ENCODE measurements at regions of chr7 and their contacts with region 1.

Region 1: GRCh38 chr7:604001-604883 is 84.6 kb upstream of the PDGFA start:
- DNase-seq: peak; percentile 92 to 96 (median 95)
- H3K4me3 ChIP-seq: peak overlapping the region in 2 of 3 experiments; percentile 32 to 41
- H3K4me3 Mint-ChIP-seq: peak overlapping the region; percentile 69 to 88
- H3K27ac ChIP-seq: peak overlapping the region; percentile 96 to 97
- H3K27ac Mint-ChIP-seq: peak overlapping the region; percentile 97 to 99 (median 98)
- H3K4me1 ChIP-seq: peaks cover 46 to 58% of the 10 kb centered on the region in 2 donors
- H3K4me1 Mint-ChIP-seq: peaks cover 50% of the 10 kb centered on the region
- H3K27me3 ChIP-seq: no peaks in the 10 kb centered on the region
- H3K27me3 Mint-ChIP-seq: peaks cover 1 to 8% (median 2%) of the 10 kb centered on the region in 3 donors
- CTCF ChIP-seq: no peak

Region 2: DNA sequence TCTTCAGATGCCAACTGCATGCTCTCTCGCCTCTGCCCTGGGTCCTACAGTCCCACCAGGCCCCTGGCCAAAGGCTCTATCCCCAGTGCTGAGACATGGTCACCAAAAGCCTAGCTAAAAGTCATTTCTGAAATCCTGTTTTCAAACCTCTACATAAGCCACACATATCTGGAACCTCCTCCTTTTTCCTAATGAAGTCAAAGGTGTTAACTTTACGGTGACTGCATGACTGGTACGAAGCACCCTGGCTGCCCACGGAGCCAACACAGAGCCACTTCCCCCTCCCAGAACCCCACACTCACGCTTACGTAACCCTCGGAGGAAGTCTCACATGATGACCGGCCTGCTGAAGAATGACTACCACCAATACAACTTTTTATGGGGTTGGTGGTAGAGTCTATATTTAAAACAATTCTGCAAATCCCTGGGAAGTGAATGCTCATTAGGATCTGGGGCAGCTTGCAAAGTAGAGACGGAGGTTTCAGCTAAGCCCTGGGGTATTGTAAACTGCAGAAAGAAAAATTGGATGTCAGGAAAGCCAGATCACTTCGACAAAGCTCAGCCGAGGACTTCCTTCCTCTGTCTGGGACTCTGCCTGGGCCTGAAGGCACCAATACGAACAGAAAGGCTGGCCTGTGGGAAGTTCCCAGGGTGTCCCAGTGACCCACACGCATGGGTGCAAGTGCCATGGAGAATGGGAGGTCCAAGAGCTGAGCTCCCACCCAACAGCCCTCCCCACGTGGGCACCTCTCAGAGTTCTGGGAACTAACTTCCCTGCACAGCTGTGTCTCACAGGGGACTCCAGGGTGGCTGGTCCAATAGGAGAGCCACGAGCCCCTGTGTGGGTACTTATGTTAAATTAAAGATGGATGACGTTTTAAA is 135.3 kb before region 1 on chr7:
- intact Hi-C with region 1: loop called in 1 of 2 experiments (anchors 2 kb)
- DNase-seq: peak; percentile 41 to 84 (median 59)
- H3K4me3 ChIP-seq: peak overlapping the region in 1 of 3 experiments; percentile 9
- H3K4me3 Mint-ChIP-seq: peak overlapping the region in 1 of 2 donors; percentile 40
- H3K27ac ChIP-seq: peak overlapping the region; percentile 80 to 86
- H3K27ac Mint-ChIP-seq: peak overlapping the region; percentile 96 to 100 (median 98)
- H3K4me1 ChIP-seq: peaks cover 15% of the 10 kb centered on the region in 2 donors
- H3K4me1 Mint-ChIP-seq: peaks cover 18% of the 10 kb centered on the region
- H3K27me3 ChIP-seq: no peaks in the 10 kb centered on the region
- H3K27me3 Mint-ChIP-seq: peaks cover 2 to 16% (median 8%) of the 10 kb centered on the region in 3 donors
- CTCF ChIP-seq: no peak

Region 3: DNA sequence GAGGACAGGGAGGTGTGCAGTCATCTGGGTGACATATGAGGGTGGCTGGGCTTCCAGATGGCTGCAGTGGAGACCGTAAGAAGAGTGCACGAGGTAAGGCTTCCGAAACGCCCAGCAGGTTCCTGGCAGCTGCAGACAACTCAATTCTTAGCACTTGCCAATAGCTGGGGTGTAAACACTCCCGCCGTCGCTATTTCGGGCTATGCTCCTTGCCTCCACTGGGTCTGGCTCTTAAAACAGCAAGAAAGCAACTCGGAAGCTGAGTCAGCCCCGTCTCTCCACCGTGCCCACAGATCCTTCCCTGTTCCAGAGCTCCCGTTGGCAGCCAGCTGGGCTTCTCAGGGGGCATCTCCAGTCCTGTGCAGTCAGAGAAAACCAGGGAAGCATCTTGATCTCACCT is 78.5 kb before region 1 on chr7:
- intact Hi-C with region 1: no loop called
- DNase-seq: no peak
- H3K4me3 ChIP-seq: no peak overlapping the region
- H3K4me3 Mint-ChIP-seq: no peak overlapping the region
- H3K27ac ChIP-seq: no peak overlapping the region
- H3K27ac Mint-ChIP-seq: no peak overlapping the region
- H3K4me1 ChIP-seq: peaks cover 6 to 17% of the 10 kb centered on the region in 2 donors
- H3K4me1 Mint-ChIP-seq: peaks cover 2% of the 10 kb centered on the region
- H3K27me3 ChIP-seq: peaks cover 19 to 50% of the 10 kb centered on the region in 2 donors
- H3K27me3 Mint-ChIP-seq: peaks cover 44 to 54% (median 52%) of the 10 kb centered on the region in 3 donors
- CTCF ChIP-seq: no peak

Region 4: GRCh38 chr7:726084-726853 is 122.0 kb after region 1 on chr7 and contains the start of gene DNAAF5:
- intact Hi-C with region 1: loop called in 1 of 2 experiments (anchors 10 kb)
- DNase-seq: peak; percentile 82 to 87 (median 86)
- H3K4me3 ChIP-seq: peak within 1 kb of the TSS; percentile 30 to 80 (median 50)
- H3K4me3 Mint-ChIP-seq: peak within 1 kb of the TSS; percentile 65 to 86
- H3K27ac ChIP-seq: peak within 1 kb of the TSS in 1 of 2 donors; percentile 75
- H3K27ac Mint-ChIP-seq: peak within 1 kb of the TSS in 1 of 7 donors; percentile 58
- H3K4me1 ChIP-seq: peaks cover 13 to 15% of the 10 kb centered on the region in 2 donors
- H3K4me1 Mint-ChIP-seq: peaks cover 17% of the 10 kb centered on the region
- H3K27me3 ChIP-seq: no peaks in the 10 kb centered on the region
- H3K27me3 Mint-ChIP-seq: peaks cover 0 to 3% (median 2%) of the 10 kb centered on the region in 3 donors
- CTCF ChIP-seq: no peak
- polyA plus RNA-seq, gene DNAAF5: 1.2 to 9.6 (median 2.0) TPM